Cardiac septum (tissue), 1 donor: ENCODE measurements at regions of chr11 and their contacts with region 1.

Region 1: DNA sequence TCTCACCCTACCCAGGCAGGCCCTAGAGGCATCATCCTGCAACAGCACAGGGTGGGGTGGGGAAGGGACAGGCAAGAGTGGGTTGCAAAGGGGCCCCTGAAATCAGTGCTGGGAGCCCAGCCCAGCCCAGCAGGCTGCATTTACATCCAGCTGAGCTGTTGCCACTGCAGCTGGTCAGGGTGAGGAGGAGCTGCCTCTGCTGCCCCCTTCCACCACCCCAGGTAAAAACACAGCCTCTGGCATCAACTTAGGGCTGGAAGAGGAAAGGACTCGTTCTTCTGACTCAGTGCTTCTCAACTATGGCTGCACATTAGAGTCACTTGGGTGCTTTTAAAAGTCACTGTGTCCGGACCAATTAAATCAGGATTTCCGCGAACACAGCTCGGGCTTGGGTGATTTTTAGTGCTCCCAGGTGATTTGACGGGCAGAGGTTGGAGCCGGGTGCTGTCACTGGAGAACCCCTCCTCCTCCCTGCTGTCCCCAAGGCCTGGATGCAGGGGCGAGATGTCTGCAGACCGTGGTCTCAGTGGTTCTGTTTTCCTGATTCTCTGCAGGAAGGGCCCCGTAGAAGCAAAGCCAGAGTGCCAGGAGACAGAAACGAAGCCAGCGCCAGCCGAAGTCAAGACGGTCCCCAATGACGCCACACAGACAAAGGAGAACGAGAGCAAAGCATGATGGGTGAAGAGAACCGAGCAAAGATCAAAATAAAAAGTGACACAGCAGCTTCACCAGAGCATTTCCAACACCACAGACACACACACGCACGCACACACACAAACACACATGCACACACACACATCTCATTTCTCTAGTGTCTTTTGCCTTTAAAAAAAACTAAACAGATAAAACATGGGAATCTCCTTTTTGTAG is 39.4 kb upstream of the TTC12 start:
- DNase-seq: no peak

Region 2: GRCh38 chr11:112817376-112817775 is 457.6 kb before region 1 on chr11:
- intact Hi-C with region 1: loop called (anchors 10 kb)
- DNase-seq: no peak

Region 3: GRCh38 chr11:113317339-113317738 is 42.4 kb after region 1 on chr11:
- intact Hi-C with region 1: no loop called
- DNase-seq: no peak